Mammary epithelial cell (primary cell): ENCODE measurements at regions of chr5 and their contacts with region 1.

Region 1: GRCh38 chr5:134845852-134846640 is at the start of gene C5orf24:
- DNase-seq: peak; percentile 93
- H3K4me3 ChIP-seq: peak within 1 kb of the TSS; percentile 53 to 92 (median 63)
- H3K27ac ChIP-seq: peak within 1 kb of the TSS; percentile 79
- H3K4me1 ChIP-seq: peaks cover 13% of the 10 kb centered on the region
- H3K27me3 ChIP-seq: no peaks in the 10 kb centered on the region
- CTCF ChIP-seq: no peak
- total RNA-seq, gene C5orf24: 40.3 to 44.1 TPM

Region 2: DNA sequence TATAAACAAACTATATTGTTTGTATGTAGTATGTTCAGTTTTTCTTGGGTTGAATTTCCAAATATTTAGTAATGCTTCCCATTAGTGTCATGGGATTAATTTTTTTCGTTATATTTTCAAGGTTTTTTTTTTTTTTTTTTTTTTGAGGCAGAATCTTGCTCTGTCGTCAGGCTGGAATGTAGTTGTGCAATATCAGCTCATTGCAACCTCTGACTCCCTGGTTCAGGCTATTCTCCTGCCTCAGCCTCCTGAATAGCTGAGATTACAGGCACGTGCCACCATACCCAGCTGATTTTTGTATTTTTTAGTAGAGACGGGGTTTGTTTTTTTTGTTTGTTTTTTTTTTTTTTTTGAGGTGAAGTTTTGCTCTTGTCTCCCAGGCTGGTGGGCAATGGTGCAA is 76.8 kb before region 1 on chr5:
- CTCF ChIA-PET with region 1: no interaction called
- dilution Hi-C with region 1: loop called (anchors 5 kb)
- in situ Hi-C with region 1: no loop called
- intact Hi-C with region 1: no loop called
- DNase-seq: peak; percentile 7
- H3K4me3 ChIP-seq: no peak overlapping the region
- H3K27ac ChIP-seq: no peak overlapping the region
- H3K4me1 ChIP-seq: no peaks in the 10 kb centered on the region
- H3K27me3 ChIP-seq: no peaks in the 10 kb centered on the region
- CTCF ChIP-seq: no peak

Region 3: DNA sequence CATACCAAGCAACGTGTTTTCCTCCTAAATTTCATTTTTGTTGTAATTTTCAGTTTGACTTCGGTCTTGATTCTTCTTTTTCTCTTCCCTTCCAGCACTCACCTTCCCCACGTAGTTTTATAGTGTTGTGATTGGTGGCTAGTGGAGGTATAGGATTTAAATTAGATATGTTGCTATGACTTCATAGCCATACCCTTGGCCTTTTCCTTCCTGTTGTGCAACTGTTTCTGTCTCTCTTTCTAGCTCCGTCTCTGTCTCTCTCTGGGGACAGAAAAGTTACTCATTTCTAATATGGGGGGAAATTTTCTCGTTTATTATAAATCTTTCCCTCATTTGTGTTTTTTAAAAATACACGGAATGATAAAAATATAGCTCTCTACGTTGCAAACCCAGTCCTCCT is 20.8 kb before region 1 on chr5:
- CTCF ChIA-PET with region 1: no interaction called
- dilution Hi-C with region 1: no loop called
- in situ Hi-C with region 1: no loop called
- intact Hi-C with region 1: no loop called
- DNase-seq: no peak
- H3K4me3 ChIP-seq: no peak overlapping the region
- H3K27ac ChIP-seq: no peak overlapping the region
- H3K4me1 ChIP-seq: no peaks in the 10 kb centered on the region
- H3K27me3 ChIP-seq: no peaks in the 10 kb centered on the region
- CTCF ChIP-seq: no peak

Region 4: GRCh38 chr5:134873987-134874830 is 28.2 kb after region 1 on chr5 and contains the start of gene TXNDC15:
- CTCF ChIA-PET with region 1: no interaction called
- dilution Hi-C with region 1: no loop called
- in situ Hi-C with region 1: no loop called
- intact Hi-C with region 1: loop called (anchors 2 kb)
- DNase-seq: peak; percentile 81
- H3K4me3 ChIP-seq: peak within 1 kb of the TSS; percentile 63 to 96 (median 68)
- H3K27ac ChIP-seq: peak within 1 kb of the TSS; percentile 75
- H3K4me1 ChIP-seq: peaks cover 13% of the 10 kb centered on the region
- H3K27me3 ChIP-seq: no peaks in the 10 kb centered on the region
- CTCF ChIP-seq: no peak
- total RNA-seq, gene TXNDC15: 30.4 to 43.0 TPM